ENCODE measurements at regions of chr12 and their contacts with region 1.

Region 1: GRCh38 chr12:47397664-47398281 is 308.1 kb downstream of the RPAP3 start:
- DNase-seq: peak; percentile 55
- H3K4me3 ChIP-seq: no peak overlapping the region
- H3K27ac ChIP-seq: no peak overlapping the region
- H3K4me1 ChIP-seq: peaks cover 12% of the 10 kb centered on the region
- H3K27me3 ChIP-seq: no peaks in the 10 kb centered on the region
- CTCF ChIP-seq: peak; percentile 58 to 59
- POLR2A ChIP-seq: no peak

Region 2: DNA sequence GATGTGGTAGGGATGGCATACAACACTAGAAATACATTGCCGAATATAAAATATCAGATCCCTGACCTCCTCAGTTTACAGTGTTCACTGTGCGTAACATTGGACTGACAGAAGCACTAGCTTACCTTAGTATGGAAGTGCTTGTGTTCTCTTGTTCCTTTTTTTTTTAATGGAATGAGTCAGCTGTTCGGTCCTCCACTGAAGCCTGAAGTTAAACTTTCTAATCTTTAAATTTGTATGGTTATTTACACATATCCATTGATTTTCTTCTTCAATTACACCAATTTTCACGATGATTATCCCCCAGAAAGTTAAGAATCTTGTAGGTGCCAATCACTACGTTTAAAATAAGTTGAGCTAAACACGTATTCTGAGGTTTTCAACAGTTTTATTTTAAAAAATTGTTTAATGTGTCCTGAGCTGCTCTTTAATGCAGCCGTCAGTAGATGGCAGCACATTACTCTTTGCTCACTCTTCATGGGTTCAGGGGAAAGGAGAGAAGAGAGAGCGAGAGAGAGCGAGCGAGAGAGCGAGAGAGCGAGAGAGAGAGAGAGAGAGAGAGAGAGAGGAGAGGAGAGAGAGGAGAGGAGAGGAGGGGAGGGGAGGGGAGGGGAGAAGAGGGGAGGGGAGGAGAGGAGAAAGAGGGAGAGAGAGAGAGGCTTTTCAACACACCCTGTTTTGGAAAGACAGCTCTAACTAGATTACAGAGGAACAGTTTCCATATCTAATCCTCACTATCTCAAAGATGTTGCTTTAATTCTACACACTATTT is 1272.7 kb before region 1 on chr12:
- CTCF ChIA-PET with region 1: interaction called, 12 read pairs
- POLR2A ChIA-PET with region 1: no interaction called
- dilution Hi-C with region 1: no loop called
- intact Hi-C with region 1: no loop called
- DNase-seq: peak; percentile 75
- H3K4me3 ChIP-seq: peak overlapping the region in 1 of 3 experiments; percentile 27
- H3K27ac ChIP-seq: no peak overlapping the region
- H3K4me1 ChIP-seq: peaks cover 4% of the 10 kb centered on the region
- H3K27me3 ChIP-seq: peaks cover 16 to 29% of the 10 kb centered on the region in 2 experiments
- CTCF ChIP-seq: peak; percentile 51 to 53
- POLR2A ChIP-seq: no peak

Region 3: GRCh38 chr12:47071241-47071852 is 326.4 kb before region 1 on chr12:
- CTCF ChIA-PET with region 1: interaction called, 47 read pairs
- POLR2A ChIA-PET with region 1: no interaction called
- dilution Hi-C with region 1: no loop called
- intact Hi-C with region 1: no loop called
- DNase-seq: no peak
- H3K4me3 ChIP-seq: no peak overlapping the region
- H3K27ac ChIP-seq: no peak overlapping the region
- H3K4me1 ChIP-seq: no peaks in the 10 kb centered on the region
- H3K27me3 ChIP-seq: no peaks in the 10 kb centered on the region
- CTCF ChIP-seq: peak; percentile 26 to 45
- POLR2A ChIP-seq: no peak

Region 4: DNA sequence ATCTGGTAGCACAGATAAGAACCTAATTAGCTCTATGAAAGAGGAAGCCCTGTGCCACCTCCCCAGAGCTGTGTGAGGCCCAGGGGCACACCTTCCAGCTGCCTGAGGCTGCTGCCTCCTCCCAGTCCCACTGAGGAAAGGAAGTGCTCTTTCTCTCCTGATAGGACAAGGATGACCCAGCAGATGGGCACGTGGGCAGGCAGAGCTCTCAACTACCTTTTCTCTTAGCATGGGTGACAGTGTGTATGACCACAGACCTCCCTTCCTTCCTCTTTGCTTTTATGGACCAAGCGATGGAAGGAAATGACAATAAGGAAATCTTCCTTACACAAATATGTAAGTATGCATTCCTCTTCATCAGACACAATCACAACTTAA is 190.4 kb before region 1 on chr12:
- CTCF ChIA-PET with region 1: interaction called, 16 read pairs
- POLR2A ChIA-PET with region 1: no interaction called
- dilution Hi-C with region 1: no loop called
- intact Hi-C with region 1: loop called (anchors 10 kb)
- DNase-seq: peak; percentile 5
- H3K4me3 ChIP-seq: no peak overlapping the region
- H3K27ac ChIP-seq: no peak overlapping the region
- H3K4me1 ChIP-seq: peaks cover 11% of the 10 kb centered on the region
- H3K27me3 ChIP-seq: no peaks in the 10 kb centered on the region
- CTCF ChIP-seq: no peak
- POLR2A ChIP-seq: no peak

Region 5: DNA sequence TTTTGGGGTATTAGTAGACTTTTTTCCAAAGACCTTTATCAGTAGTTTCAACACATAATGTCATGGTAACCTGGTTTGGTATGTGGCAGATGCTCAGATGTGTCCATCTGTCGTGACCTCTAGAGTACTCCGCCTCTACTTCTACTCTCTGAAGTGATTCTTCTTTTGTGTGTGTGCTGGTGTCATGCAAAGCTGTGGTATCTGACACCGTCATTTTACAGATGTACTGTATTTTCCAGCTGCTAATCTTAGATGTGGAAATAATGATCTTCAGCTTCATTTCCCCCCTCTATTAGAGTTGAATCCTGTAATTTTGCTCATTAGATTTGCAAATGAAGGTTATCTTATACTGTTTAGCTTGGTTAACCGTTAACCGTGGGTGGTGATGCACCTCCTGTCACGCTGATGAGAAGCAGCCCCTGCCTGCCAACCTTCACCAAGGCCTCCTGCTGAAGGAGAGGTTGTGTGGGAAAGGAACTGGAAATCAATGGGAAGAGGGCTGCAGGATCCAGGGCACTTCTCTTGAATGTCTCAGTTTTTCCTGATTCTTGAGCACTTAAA is 95.6 kb before region 1 on chr12:
- CTCF ChIA-PET with region 1: interaction called, 43 read pairs
- POLR2A ChIA-PET with region 1: no interaction called
- dilution Hi-C with region 1: no loop called
- intact Hi-C with region 1: no loop called
- DNase-seq: no peak
- H3K4me3 ChIP-seq: no peak overlapping the region
- H3K27ac ChIP-seq: no peak overlapping the region
- H3K4me1 ChIP-seq: no peaks in the 10 kb centered on the region
- H3K27me3 ChIP-seq: no peaks in the 10 kb centered on the region
- CTCF ChIP-seq: no peak
- POLR2A ChIP-seq: no peak

Region 6: DNA sequence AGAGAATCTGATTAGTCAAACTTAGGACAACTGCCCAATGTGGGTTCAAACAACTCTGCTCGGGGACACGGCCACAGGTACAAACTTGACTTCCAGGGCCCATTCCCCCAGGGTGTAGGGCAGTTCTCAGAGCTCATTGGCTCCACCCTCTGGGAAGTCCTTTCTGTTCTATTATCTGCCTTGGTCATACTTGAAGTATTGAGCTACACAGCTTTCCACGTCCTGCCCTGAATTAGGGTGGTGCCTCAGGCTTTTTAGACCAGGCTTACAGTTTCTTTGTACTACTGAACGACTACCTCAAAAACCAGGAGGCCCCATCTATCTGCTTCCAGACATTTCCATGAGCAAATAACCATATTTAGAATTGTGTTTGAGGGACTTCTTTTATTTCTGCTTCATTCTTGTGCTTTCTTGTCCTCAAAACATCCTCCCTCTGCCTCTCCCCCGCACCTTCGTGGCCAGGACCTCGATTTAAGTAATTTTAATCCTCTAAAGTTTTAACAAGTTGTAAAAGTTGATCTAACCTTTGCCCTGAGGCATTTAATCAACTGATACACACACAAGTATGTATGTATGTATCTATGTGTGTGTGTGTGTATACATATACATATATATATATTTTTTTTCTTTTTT is 36.3 kb before region 1 on chr12:
- CTCF ChIA-PET with region 1: interaction called, 15 read pairs
- POLR2A ChIA-PET with region 1: no interaction called
- dilution Hi-C with region 1: no loop called
- intact Hi-C with region 1: no loop called
- DNase-seq: no peak
- H3K4me3 ChIP-seq: no peak overlapping the region
- H3K27ac ChIP-seq: peak overlapping the region; percentile 67
- H3K4me1 ChIP-seq: peaks cover 20% of the 10 kb centered on the region
- H3K27me3 ChIP-seq: no peaks in the 10 kb centered on the region
- CTCF ChIP-seq: no peak
- POLR2A ChIP-seq: no peak

Region 7: DNA sequence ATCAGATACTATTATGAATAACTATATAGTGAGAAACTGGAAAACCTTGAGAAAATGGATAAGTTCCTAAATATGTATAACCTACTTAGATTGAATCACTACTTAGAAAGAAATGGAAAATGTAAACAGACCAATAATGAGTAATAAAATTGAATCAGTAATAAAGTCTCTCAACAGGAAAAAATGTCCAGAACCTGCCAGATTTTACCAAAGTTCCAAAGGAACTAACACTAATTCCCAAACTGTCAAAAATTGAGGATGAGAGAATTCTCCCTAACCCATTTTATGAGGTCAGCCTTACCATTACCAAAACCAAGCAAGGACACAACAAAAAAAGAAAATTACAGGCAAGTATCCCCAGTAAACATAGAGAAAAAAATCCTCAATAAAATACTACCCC is 36.1 kb after region 1 on chr12:
- CTCF ChIA-PET with region 1: no interaction called
- POLR2A ChIA-PET with region 1: no interaction called
- dilution Hi-C with region 1: no loop called
- intact Hi-C with region 1: no loop called
- DNase-seq: no peak
- H3K4me3 ChIP-seq: no peak overlapping the region
- H3K27ac ChIP-seq: no peak overlapping the region
- H3K4me1 ChIP-seq: no peaks in the 10 kb centered on the region
- H3K27me3 ChIP-seq: no peaks in the 10 kb centered on the region
- CTCF ChIP-seq: no peak
- POLR2A ChIP-seq: no peak

Region 8: GRCh38 chr12:47686645-47687240 is 289.0 kb after region 1 on chr12:
- CTCF ChIA-PET with region 1: interaction called, 15 read pairs
- POLR2A ChIA-PET with region 1: no interaction called
- dilution Hi-C with region 1: no loop called
- intact Hi-C with region 1: no loop called
- DNase-seq: peak; percentile 54
- H3K4me3 ChIP-seq: no peak overlapping the region
- H3K27ac ChIP-seq: no peak overlapping the region
- H3K4me1 ChIP-seq: no peaks in the 10 kb centered on the region
- H3K27me3 ChIP-seq: no peaks in the 10 kb centered on the region
- CTCF ChIP-seq: peak; percentile 20 to 61
- POLR2A ChIP-seq: no peak

Measured in endothelial cell of umbilical vein (primary cell).